AG04449 (cell line): ENCODE measurements at regions of chr6 and their contacts with region 1.

Region 1: DNA sequence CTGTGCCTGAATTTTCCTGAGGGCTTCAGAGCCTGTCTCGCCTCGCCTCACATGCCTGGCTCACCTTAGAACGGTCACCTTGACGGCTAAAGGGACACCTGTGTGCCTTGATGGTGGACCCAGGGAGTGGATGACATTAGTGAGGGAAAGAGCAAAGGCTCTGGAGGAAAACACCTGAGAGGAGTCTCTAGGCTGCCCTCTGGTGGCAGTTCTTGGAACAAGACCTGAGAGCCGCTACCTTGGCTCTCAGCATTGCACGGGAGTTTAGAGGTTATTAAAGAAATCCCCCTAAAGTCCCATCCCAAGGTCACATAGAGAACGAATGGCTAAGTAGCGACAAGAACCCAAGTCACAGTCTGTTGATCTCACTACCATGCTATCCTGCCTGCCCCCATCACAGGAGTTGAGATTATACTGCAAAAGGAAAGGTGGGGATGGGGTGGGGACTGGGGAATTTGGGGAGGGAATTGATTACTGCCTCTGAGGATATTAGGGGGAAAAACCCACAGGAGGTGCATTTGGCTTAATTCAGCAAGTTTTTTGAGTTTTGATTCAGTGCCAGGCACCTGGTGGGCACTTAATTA is 7.9 kb upstream of the CDSN start:
- DNase-seq: no peak
- H3K4me3 ChIP-seq: no peak overlapping the region
- CTCF ChIP-seq: peak; percentile 68

Region 2: GRCh38 chr6:29995340-29995777 is 1132.8 kb before region 1 on chr6:
- CTCF ChIA-PET with region 1: no interaction called
- POLR2A ChIA-PET with region 1: no interaction called
- DNase-seq: no peak
- H3K4me3 ChIP-seq: no peak overlapping the region
- CTCF ChIP-seq: no peak

Region 3: GRCh38 chr6:30836431-30836866 is 291.7 kb before region 1 on chr6:
- CTCF ChIA-PET with region 1: no interaction called
- POLR2A ChIA-PET with region 1: no interaction called
- DNase-seq: no peak
- H3K4me3 ChIP-seq: no peak overlapping the region
- CTCF ChIP-seq: no peak

Region 4: DNA sequence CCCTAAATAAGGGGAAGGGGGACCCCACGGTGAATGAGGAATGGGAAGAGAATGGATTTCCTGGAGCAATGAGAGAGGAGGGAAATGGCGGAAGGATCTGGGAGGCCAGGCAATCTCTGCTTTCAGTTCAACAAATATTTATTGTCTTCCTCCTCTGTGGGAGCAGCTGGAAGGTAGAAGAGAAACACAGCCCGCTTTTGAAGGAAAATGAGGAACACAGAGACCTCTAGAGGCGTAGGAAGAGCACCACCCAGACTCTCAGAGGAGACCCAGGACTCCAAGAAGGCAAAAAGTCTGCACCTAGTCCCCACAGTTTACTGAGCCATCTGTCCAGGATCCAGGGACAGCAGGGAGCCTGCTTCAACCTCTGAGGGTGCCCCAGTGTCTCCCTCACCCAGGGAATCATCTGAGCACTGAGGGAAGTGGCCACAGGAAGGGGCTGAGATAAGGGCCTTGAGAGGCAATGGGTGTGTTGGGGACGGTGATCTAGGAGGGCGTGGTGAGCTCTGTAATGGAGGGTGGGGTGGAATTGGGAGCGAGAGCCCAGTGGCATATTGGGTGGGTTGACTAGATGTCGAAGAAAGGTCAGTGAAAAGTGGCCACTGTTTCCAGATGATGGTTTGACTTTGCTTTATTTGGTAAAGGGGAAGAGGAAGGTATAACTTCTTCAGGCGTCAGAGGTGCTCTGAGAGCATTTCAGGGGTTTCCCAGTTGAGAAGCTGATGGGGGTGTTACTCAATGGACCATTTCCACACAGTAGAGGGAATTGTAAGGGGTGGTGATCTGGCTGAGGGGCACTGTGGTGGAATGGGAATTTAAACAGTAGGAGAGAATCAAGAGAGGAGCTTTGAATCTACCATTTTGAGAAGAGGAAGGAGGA is 13.0 kb before region 1 on chr6:
- CTCF ChIA-PET with region 1: interaction called, 162 read pairs
- POLR2A ChIA-PET with region 1: no interaction called
- DNase-seq: no peak
- H3K4me3 ChIP-seq: peak overlapping the region; percentile 25
- CTCF ChIP-seq: peak; percentile 35

Region 5: GRCh38 chr6:31143148-31143547 is 15.0 kb after region 1 on chr6:
- CTCF ChIA-PET with region 1: interaction called, 100 read pairs
- POLR2A ChIA-PET with region 1: no interaction called
- DNase-seq: no peak
- H3K4me3 ChIP-seq: no peak overlapping the region
- CTCF ChIP-seq: no peak

Region 6: DNA sequence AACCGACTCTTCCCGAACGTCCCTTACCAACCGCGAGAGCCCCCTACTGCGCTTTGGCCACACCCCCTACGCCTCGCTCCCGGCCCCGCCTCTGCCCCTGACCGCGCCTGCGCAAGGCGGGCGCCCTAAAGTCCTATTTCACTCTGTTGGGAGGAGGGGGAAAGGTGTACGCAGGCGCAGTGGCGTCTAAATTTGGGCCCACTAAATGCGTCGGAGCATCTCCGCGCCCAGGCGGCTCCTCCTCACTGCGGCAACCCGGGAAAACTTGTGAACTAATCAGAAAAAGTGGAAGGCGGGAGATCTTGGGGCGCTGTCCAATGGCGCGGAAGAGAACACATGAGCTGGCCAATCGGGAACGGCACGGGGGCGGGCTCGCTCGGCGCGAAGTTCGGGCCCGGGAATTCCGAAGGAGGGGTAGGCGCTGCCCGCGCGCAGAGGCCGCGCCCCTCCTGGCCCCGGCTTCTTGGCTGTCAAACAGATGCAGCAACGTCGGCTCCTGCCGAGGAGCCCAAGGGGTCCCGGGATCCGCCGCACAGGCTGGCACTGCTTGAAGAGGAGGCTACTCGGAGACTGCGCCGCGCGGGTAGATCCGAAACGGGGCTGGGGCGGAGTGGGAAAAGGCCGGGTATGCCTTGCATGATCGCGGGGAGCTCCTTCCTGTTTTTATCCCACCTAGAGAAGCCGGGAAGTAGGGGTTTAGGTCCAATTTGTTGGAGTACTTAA is 30.1 kb after region 1 on chr6 and contains the start of gene TCF19:
- CTCF ChIA-PET with region 1: interaction called, 24 read pairs
- POLR2A ChIA-PET with region 1: interaction called, 3 read pairs
- DNase-seq: peak; percentile 91
- H3K4me3 ChIP-seq: peak within 1 kb of the TSS; percentile 84
- CTCF ChIP-seq: no peak